Activated CD4-positive, alpha-beta T cell treated with anti-CD3 and anti-CD28 coated beads for 36 hours (primary cell): ENCODE measurements at regions of chr17 and their contacts with region 1.

Region 1: GRCh38 chr17:20141198-20141972 is 132.2 kb downstream of the SPECC1 start:
- DNase-seq: no peak
- ATAC-seq: no peak
- H3K4me3 Mint-ChIP-seq: no peak overlapping the region
- H3K27ac Mint-ChIP-seq: no peak overlapping the region
- H3K4me1 Mint-ChIP-seq: no peaks in the 10 kb centered on the region
- H3K27me3 Mint-ChIP-seq: peaks cover 3% of the 10 kb centered on the region

Region 2: GRCh38 chr17:19812407-19812806 is 329.0 kb before region 1 on chr17:
- CTCF ChIA-PET with region 1: no interaction called
- POLR2A ChIA-PET with region 1: no interaction called
- intact Hi-C with region 1: no loop called
- DNase-seq: peak; percentile 20
- ATAC-seq: no peak
- H3K4me3 Mint-ChIP-seq: no peak overlapping the region
- H3K27ac Mint-ChIP-seq: no peak overlapping the region
- H3K4me1 Mint-ChIP-seq: no peaks in the 10 kb centered on the region
- H3K27me3 Mint-ChIP-seq: no peaks in the 10 kb centered on the region

Region 3: DNA sequence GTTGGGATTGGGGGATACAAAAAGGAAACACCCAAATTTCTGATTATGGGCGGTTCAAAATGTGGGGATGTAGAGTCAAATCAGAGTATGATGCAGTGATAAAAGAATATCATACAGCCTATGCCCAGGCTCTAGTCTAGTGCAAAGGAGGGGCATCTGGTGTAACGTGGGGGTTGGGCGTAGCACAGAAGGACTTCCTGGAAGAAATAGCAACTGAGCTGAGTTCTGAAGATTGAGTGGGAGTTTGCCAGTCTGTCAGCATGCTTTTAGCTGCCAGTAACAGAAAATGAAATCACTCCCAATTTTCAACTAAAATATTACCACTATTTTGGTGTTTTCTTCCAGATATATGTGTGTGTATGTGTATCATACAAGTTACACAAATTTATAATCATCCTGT is 64.7 kb after region 1 on chr17:
- CTCF ChIA-PET with region 1: no interaction called
- POLR2A ChIA-PET with region 1: no interaction called
- intact Hi-C with region 1: loop called in 1 of 2 experiments (anchors 5 kb)
- DNase-seq: peak; percentile 70
- ATAC-seq: peak; percentile 96
- H3K4me3 Mint-ChIP-seq: no peak overlapping the region
- H3K27ac Mint-ChIP-seq: peak overlapping the region; percentile 55
- H3K4me1 Mint-ChIP-seq: peaks cover 24% of the 10 kb centered on the region
- H3K27me3 Mint-ChIP-seq: no peaks in the 10 kb centered on the region